AG04450 (cell line): ENCODE measurements at regions of chr6 and their contacts with region 1.

Region 1: GRCh38 chr6:82006027-82006738 is 241.4 kb downstream of the IBTK start:
- DNase-seq: no peak
- H3K4me3 ChIP-seq: no peak overlapping the region
- H3K27ac ChIP-seq: no peak overlapping the region
- H3K27me3 ChIP-seq: no peaks in the 10 kb centered on the region
- CTCF ChIP-seq: peak; percentile 66

Region 2: GRCh38 chr6:80402266-80402665 is 1603.9 kb before region 1 on chr6:
- CTCF ChIA-PET with region 1: no interaction called
- POLR2A ChIA-PET with region 1: interaction called, 11 read pairs
- DNase-seq: peak; percentile 1
- H3K4me3 ChIP-seq: no peak overlapping the region
- H3K27ac ChIP-seq: no peak overlapping the region
- H3K27me3 ChIP-seq: no peaks in the 10 kb centered on the region
- CTCF ChIP-seq: no peak